Caco-2 (cell line): ENCODE measurements at regions of chr11 and their contacts with region 1.

Region 1: GRCh38 chr11:107123022-107123421 is 104.7 kb upstream of the GUCY1A2 start:
- DNase-seq: no peak
- H3K4me3 ChIP-seq: no peak overlapping the region
- H3K4me3 Mint-ChIP-seq: no peak overlapping the region
- H3K27ac Mint-ChIP-seq: no peak overlapping the region
- H3K4me1 ChIP-seq: no peaks in the 10 kb centered on the region
- H3K4me1 Mint-ChIP-seq: no peaks in the 10 kb centered on the region
- H3K27me3 ChIP-seq: no peaks in the 10 kb centered on the region
- H3K27me3 Mint-ChIP-seq: no peaks in the 10 kb centered on the region
- CTCF ChIP-seq: peak in 1 of 2 experiments; percentile 17

Region 2: DNA sequence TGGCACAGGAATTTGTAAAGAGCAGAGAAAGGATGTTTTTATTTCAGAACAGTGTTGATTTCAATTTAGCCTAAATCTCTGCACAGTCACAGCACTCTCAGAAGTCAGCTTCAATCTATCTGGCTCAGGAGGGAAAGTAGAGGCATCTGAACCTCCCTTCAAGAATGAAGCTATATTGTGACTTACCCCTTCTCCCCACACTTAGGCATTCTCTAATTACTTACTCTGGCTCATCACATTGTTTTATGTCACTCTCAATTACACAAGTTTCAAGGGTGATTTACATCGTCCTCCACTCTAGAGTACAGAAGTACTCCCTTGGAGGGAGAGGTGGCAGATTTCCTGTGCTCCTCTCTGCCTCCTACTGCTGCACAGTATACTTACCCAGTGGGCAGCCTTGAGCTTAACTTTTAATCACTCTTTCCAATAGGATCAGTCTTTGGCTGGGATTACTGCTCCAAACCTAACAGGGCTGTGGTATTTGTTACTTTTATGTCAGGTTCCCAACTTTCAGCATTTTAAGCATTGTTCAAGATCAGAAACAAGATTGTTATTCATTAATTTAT is 834.1 kb before region 1 on chr11:
- CTCF ChIA-PET with region 1: no interaction called
- POLR2A ChIA-PET with region 1: no interaction called
- intact Hi-C with region 1: loop called (anchors 5 kb)
- DNase-seq: no peak
- H3K4me3 ChIP-seq: no peak overlapping the region
- H3K4me3 Mint-ChIP-seq: no peak overlapping the region
- H3K27ac Mint-ChIP-seq: no peak overlapping the region
- H3K4me1 ChIP-seq: peaks cover 11% of the 10 kb centered on the region; the same call in 1 of the 2 replicates
- H3K4me1 Mint-ChIP-seq: no peaks in the 10 kb centered on the region
- H3K27me3 ChIP-seq: no peaks in the 10 kb centered on the region
- H3K27me3 Mint-ChIP-seq: no peaks in the 10 kb centered on the region
- CTCF ChIP-seq: no peak

Region 3: GRCh38 chr11:107307991-107308390 is 185.0 kb after region 1 on chr11:
- CTCF ChIA-PET with region 1: no interaction called
- POLR2A ChIA-PET with region 1: no interaction called
- intact Hi-C with region 1: no loop called
- DNase-seq: no peak
- H3K4me3 ChIP-seq: no peak overlapping the region
- H3K4me3 Mint-ChIP-seq: no peak overlapping the region
- H3K27ac Mint-ChIP-seq: no peak overlapping the region
- H3K4me1 ChIP-seq: no peaks in the 10 kb centered on the region
- H3K4me1 Mint-ChIP-seq: no peaks in the 10 kb centered on the region
- H3K27me3 ChIP-seq: no peaks in the 10 kb centered on the region
- H3K27me3 Mint-ChIP-seq: no peaks in the 10 kb centered on the region
- CTCF ChIP-seq: no peak